ENCODE measurements at regions of chr6 and their contacts with region 1.

Region 1: DNA sequence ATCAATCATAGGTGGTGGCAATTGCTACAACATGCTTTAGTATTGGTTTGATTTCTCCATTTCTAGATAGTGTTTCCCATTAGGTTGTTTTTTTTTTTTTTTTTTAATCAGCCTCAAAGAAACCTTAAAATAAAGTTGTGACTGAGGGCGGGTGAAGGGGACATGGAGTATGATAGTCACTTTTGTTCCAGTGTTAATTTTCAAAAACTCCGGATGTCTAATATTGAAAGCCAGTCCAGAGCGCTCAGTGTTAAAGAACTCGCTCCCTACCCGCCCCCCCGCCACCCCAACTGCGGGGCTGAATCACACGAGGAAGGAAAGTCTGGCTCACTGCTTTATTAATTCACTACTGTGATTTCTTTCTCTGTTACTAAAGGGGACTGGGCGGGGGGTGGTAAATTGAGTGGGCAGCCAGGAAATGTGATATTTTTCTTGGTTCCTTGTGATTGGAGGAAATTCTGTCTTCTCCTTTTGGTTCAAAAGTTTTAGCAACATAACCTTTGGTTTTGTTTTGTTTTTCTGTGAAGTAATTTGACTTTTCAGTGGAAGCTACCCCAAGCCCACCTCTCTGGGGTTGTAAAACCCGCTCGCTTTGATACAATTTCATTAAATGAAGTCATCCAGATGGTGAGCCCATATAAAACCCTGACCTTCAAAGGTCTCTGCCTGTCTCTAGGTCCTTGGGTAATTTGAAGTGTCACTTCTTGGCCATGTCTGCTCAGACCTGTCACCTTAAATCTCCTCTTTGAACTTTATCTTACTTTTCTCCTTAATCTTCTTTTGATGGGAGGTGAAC is 38.0 kb downstream of the TNFAIP3 start:
- DNase-seq: peak; percentile 31
- H3K4me3 Mint-ChIP-seq: peak overlapping the region; percentile 54
- H3K27ac Mint-ChIP-seq: peak overlapping the region; percentile 94
- H3K4me1 Mint-ChIP-seq: peaks cover 17% of the 10 kb centered on the region
- H3K27me3 Mint-ChIP-seq: no peaks in the 10 kb centered on the region
- CTCF ChIP-seq: no peak

Region 2: GRCh38 chr6:137832110-137832509 is 72.9 kb before region 1 on chr6:
- CTCF ChIA-PET with region 1: no interaction called
- intact Hi-C with region 1: no loop called
- DNase-seq: no peak
- H3K4me3 Mint-ChIP-seq: no peak overlapping the region
- H3K27ac Mint-ChIP-seq: no peak overlapping the region
- H3K4me1 Mint-ChIP-seq: no peaks in the 10 kb centered on the region
- H3K27me3 Mint-ChIP-seq: no peaks in the 10 kb centered on the region
- CTCF ChIP-seq: no peak

Region 3: GRCh38 chr6:137873273-137873762 is 31.7 kb before region 1 on chr6:
- CTCF ChIA-PET with region 1: no interaction called
- intact Hi-C with region 1: loop called (anchors 5 kb)
- DNase-seq: peak; percentile 63
- H3K4me3 Mint-ChIP-seq: peak overlapping the region; percentile 48
- H3K27ac Mint-ChIP-seq: peak overlapping the region; percentile 71
- H3K4me1 Mint-ChIP-seq: peaks cover 36% of the 10 kb centered on the region
- H3K27me3 Mint-ChIP-seq: no peaks in the 10 kb centered on the region
- CTCF ChIP-seq: no peak

Measured in Calu3 (cell line).